ENCODE measurements at regions of chr17 and their contacts with region 1.

Region 1: GRCh38 chr17:32215696-32216095 is 49.9 kb upstream of the RHBDL3 start:
- DNase-seq: no peak
- ATAC-seq: no peak
- H3K4me3 ChIP-seq: no peak overlapping the region
- H3K27ac ChIP-seq: no peak overlapping the region
- H3K4me1 ChIP-seq: peaks cover 0 to 10% (median 0%) of the 10 kb centered on the region in 9 donors
- H3K27me3 ChIP-seq: no peaks in the 10 kb centered on the region
- CTCF ChIP-seq: no peak

Region 2: DNA sequence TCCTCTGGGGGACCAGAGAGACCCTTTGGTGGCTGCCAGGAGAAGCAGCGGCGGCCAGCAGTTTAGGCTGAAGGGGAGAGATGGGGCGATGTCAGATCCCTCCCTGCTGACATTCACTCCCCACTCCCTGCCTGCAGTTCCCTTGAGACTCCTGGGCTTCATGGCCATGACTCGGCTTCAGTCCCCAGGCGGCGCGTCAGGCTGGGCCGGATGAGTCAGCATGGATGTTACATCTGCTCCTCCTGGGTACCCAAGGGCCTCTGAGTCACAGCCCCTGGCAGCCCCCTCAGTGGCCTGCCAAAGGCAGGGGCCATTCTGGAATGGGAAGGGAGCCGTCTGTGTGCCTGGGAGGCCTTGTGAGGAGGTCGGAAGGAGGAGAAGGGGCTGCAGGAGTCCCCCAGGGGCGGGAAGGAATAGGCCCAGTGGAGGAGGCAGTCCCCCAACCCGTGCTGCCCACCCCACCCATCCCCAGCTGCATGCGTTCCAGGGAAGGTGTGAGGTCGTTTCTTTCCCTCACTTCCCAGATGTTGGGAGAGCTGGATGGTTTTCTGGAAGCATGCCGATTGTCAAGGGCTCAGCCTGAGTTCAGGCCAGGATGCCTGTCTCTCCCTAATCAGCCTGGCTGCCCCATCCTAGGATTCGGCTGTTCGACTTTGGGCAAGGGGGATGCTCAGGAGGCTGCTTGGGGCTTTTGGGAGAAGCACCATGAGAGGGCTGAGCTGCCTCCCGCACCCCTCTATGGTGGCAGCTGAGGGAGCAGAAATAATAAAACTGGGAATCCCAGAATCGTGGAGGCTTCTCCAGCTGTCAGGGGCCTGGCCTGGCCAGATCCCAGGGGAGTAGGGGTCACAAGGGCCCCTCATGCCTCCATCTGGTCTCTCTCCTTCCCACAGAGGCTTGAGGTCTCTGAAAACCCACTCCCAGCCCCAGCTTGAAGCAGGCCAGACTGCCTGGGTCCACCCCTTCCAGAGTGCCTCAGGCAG is 59.7 kb after region 1 on chr17:
- intact Hi-C with region 1: loop called in 1 of 10 experiments (anchors 10 kb)
- DNase-seq: peak in 1 of 2 donors; percentile 52
- ATAC-seq: peak in 7 of 8 donors; percentile 27 to 77 (median 53)
- H3K4me3 ChIP-seq: no peak overlapping the region
- H3K27ac ChIP-seq: no peak overlapping the region
- H3K4me1 ChIP-seq: peaks cover 0 to 12% (median 0%) of the 10 kb centered on the region in 9 donors
- H3K27me3 ChIP-seq: peaks cover 0 to 26% (median 14%) of the 10 kb centered on the region in 7 donors
- CTCF ChIP-seq: no peak